Activated CD4-positive, alpha-beta T cell treated with anti-CD3 and anti-CD28 coated beads for 36 hours (primary cell): ENCODE measurements at regions of chr9 and their contacts with region 1.

Region 1: DNA sequence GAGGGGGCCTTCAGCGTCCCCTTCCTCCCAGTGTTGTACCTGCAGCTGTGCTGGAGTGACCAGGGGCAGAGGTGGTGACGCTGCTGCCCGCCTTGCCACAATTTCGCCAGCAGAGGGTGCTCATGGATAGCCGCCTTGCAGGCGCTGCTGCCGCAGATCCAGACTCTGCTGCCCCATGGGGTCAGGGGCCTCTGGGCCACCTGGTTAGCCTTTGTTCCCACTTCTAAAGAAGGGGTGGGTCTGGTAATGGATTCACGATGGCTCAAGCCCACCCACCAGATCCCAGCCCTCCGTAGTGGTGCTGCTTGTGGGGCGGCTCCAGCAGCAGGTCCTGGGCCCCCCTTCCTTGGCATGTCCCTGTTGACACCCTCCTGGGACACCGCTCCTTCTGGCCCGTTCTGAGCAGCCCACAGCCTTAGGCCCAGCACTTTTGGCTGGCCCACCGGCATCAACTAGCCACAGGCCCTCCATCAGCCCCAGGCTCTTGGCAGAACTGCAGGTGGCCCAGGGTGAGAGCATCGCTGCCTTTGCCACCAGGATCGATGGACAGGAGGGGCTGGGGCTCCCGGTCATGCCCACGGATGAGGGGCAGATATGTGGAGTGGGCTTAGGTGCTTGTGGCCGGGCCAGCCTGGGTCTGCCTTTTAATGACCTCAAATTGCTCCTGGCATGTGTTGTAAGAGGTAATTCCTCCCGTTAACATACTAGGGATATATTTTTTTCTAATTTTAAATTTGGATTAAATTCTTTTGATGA is 57.2 kb downstream of the COL5A1 start:
- DNase-seq: peak; percentile 82
- ATAC-seq: peak; percentile 68
- H3K4me3 Mint-ChIP-seq: no peak overlapping the region
- H3K27ac Mint-ChIP-seq: no peak overlapping the region
- H3K4me1 Mint-ChIP-seq: no peaks in the 10 kb centered on the region
- H3K27me3 Mint-ChIP-seq: no peaks in the 10 kb centered on the region

Region 2: DNA sequence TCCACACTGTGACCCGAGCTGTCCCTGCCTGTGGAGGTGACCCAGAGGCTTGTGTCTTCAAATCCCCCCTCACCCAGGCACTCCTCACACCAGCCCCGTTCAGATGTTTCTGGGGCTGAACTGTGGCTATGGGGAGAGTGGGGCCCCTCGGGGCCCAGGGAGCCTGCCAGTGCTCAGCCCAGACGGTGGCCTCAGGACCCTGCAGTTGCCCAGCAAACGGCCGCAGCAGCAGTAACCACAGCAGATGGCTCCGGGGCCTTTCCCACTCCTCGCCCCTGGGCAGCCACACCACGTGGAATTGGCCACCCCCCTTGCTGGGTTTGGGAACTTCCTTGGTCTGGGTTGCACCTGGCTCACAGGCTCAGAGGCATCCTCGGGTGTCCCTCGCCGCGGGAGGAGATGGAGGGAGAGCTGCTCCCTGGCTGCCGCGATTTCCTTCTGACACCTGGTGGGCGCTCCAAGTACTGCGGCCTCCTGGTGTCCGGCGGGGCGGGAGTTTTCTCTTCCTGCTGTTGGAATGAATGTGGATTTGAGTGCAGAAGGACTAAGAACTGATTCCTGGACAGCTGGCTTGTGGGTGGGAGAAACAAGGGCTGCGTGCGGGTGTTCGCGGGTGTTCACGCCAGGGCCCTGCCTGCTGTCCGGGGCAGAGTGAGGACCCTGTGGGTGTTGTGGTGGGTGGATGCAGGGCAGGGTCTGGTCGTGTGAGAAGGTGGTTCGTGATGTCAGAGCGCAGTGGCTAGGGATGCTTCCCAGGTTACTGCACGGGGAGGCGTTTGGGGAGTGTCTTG is 40.3 kb after region 1 on chr9:
- CTCF ChIA-PET with region 1: interaction called, 3 read pairs
- POLR2A ChIA-PET with region 1: no interaction called
- intact Hi-C with region 1: loop called (anchors 1 to 5 kb)
- DNase-seq: peak; percentile 60
- ATAC-seq: no peak
- H3K4me3 Mint-ChIP-seq: no peak overlapping the region
- H3K27ac Mint-ChIP-seq: no peak overlapping the region
- H3K4me1 Mint-ChIP-seq: no peaks in the 10 kb centered on the region
- H3K27me3 Mint-ChIP-seq: no peaks in the 10 kb centered on the region

Region 3: DNA sequence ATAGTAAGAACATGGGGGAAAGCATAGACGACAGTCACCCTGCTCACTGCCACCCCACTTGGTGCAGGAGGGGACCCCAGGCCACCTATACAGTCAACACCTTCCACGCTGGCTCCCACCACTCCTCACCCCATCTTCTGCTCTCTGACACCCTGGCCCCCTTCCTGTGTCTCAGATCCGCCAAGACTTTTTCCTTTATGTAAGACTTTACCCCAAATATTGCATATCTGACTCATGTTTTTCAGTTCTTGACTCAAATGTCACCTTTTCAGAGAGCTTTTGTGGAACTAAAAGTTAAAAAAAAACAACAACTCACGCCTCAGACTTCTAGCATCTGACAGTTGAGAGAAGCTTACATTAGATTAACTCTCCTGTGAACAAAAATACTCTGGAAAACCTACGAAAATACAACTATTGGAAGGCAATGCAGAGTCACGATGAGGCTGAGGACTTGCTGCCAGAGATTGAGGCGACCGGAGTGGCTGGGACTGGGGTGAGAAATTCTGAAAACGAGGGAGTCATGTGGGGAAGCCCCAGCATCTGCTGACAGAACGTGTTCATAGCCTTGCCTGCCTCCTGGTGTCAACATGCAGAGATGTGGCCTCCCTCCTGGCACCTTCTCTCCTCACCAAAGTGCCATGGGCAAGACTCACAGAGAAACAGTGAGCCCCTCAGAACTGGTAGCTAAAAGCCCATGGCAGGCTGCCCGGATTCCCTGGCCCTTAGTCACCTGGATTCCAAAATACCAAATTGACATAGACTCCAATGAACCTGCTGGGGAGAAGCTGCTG is 159.5 kb after region 1 on chr9:
- CTCF ChIA-PET with region 1: interaction called, 7 read pairs
- POLR2A ChIA-PET with region 1: no interaction called
- intact Hi-C with region 1: loop called (anchors 1 kb)
- DNase-seq: peak; percentile 82
- ATAC-seq: peak; percentile 97
- H3K4me3 Mint-ChIP-seq: peak overlapping the region; percentile 19
- H3K27ac Mint-ChIP-seq: peak overlapping the region; percentile 89
- H3K4me1 Mint-ChIP-seq: peaks cover 17% of the 10 kb centered on the region
- H3K27me3 Mint-ChIP-seq: peaks cover 25% of the 10 kb centered on the region

Region 4: DNA sequence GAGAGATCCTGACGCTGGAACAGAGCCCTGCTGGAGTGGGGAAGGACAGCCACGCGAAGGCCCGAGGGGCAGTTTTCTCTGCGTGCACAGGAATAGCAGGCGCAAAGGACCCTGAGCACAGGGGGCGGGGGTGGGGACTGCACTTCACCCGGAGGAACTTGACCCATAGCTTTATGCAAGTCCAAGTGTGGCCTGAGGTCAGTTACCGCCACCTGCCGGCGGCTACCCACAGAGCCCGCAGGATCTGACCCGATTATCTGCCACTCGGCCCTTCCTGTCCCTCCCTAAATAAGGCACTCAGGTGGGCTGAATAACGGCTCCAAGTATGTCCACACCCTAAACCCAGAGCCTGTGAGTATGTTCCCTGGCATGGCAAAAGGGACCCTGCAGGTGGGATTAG is 284.3 kb after region 1 on chr9:
- CTCF ChIA-PET with region 1: no interaction called
- POLR2A ChIA-PET with region 1: no interaction called
- intact Hi-C with region 1: loop called in 1 of 2 experiments (anchors 1 kb)
- DNase-seq: peak; percentile 18
- ATAC-seq: no peak
- H3K4me3 Mint-ChIP-seq: no peak overlapping the region
- H3K27ac Mint-ChIP-seq: no peak overlapping the region
- H3K4me1 Mint-ChIP-seq: no peaks in the 10 kb centered on the region
- H3K27me3 Mint-ChIP-seq: peaks cover 7% of the 10 kb centered on the region

Region 5: GRCh38 chr9:135343837-135344522 is 645.2 kb after region 1 on chr9:
- CTCF ChIA-PET with region 1: no interaction called
- POLR2A ChIA-PET with region 1: no interaction called
- intact Hi-C with region 1: loop called in 1 of 2 experiments (anchors 1 kb)
- DNase-seq: peak; percentile 76
- ATAC-seq: peak; percentile 42
- H3K4me3 Mint-ChIP-seq: no peak overlapping the region
- H3K27ac Mint-ChIP-seq: no peak overlapping the region
- H3K4me1 Mint-ChIP-seq: no peaks in the 10 kb centered on the region
- H3K27me3 Mint-ChIP-seq: peaks cover 6% of the 10 kb centered on the region